Vagina (tissue), 2 donors: ENCODE measurements at regions of chr14 and their contacts with region 1.

Region 1: DNA sequence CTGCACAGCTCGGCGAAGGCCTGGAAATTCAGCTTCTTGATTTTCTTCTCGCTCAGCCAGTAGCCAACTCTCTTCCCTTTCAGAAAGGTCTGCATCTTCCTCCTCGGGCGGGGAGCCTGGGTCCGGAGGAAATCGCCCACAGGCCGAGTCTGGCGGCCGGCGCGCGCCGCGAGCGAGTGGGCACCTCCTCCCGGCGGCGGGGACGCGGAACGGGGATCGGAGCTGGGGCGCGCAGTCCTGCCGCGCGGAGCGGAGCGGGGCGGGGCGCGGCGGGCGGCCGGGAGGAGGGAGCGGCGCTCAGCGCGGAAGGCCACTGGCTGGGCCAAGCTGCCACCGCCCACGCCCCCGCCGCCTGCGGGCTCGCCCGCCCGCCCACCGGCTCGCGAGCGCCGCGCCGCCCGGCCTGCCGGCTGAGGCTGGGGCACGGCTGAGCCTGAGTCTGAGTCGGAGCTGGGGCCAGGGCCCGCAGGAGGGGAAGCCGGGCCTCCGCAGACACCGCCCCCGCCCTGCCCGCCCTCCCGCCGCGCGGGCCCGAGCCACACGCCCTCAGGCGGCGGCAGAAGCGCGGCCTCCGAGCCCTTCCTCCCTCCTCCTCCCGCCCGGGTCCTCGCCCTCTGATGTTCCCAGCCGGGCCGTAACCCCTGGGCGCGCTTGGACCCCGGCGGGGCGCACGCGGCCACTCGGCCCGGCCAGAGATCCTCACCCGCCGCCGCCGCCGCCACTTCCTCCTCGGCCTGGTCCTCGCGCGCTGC is 480 bp downstream of the ITPK1 start:
- DNase-seq: no peak
- H3K4me3 ChIP-seq: peak overlapping the region; percentile 88 to 92
- H3K27ac ChIP-seq: peak overlapping the region; percentile 98
- H3K4me1 ChIP-seq: peaks cover 56% of the 10 kb centered on the region
- H3K27me3 ChIP-seq: no peaks in the 10 kb centered on the region
- CTCF ChIP-seq: no peak
- POLR2A ChIP-seq: peak in 1 of 2 donors; percentile 72

Region 2: DNA sequence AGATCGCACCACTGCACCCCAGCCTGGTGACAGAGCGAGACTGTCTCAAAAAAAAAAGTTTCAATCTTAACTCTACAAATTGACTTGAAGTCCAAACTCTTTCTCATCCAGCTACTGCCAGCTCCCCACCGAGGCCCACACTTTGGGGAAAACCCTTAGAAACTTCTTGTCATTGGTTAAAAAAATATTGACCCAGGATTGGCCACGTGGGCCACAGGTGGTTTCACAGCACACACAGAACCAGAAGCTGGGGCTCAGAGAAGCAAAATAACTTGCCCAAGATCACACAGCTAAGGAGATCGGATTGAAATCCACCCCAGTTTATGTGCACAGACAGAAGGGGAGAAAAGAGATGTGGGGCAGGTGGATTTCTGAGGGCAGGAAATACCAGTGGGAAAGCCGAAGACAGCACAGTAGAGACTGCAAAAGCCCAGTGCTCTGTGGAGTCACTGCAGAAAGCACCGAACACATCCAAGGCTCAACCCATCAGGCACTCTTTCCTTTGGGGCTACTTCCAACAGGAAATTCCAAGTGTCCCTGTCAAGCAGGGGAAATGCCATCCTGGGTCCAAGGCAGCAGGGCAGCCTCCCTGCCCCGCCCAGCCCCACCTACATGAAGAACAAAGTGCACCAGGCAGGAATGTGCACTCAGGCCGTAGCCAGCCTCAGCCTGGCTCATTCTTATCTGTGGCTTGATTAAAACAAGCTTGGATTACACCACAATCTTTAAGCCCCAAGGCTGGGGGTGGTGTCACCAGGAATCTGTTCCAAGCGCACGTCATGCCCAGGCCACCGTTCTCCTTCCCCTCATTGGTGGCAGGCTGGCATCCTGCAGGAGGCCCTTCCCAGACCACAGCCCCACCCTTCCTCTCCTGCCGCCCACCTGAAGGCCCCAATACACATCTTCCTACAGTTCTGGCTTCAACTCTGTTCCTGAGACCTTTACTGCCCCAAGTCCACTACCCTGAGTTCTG is 72.0 kb before region 1 on chr14:
- intact Hi-C with region 1: loop called (anchors 10 kb)
- DNase-seq: no peak
- H3K4me3 ChIP-seq: no peak overlapping the region
- H3K27ac ChIP-seq: peak overlapping the region; percentile 61
- H3K4me1 ChIP-seq: peaks cover 83% of the 10 kb centered on the region
- H3K27me3 ChIP-seq: no peaks in the 10 kb centered on the region
- CTCF ChIP-seq: no peak
- POLR2A ChIP-seq: no peak

Region 3: GRCh38 chr14:93086441-93087055 is 28.7 kb before region 1 on chr14:
- intact Hi-C with region 1: no loop called
- DNase-seq: no peak
- H3K4me3 ChIP-seq: no peak overlapping the region
- H3K27ac ChIP-seq: peak overlapping the region; percentile 33
- H3K4me1 ChIP-seq: peaks cover 75% of the 10 kb centered on the region
- H3K27me3 ChIP-seq: no peaks in the 10 kb centered on the region
- CTCF ChIP-seq: no peak
- POLR2A ChIP-seq: no peak